ENCODE measurements at regions of chr3 and their contacts with region 1.

Region 1: DNA sequence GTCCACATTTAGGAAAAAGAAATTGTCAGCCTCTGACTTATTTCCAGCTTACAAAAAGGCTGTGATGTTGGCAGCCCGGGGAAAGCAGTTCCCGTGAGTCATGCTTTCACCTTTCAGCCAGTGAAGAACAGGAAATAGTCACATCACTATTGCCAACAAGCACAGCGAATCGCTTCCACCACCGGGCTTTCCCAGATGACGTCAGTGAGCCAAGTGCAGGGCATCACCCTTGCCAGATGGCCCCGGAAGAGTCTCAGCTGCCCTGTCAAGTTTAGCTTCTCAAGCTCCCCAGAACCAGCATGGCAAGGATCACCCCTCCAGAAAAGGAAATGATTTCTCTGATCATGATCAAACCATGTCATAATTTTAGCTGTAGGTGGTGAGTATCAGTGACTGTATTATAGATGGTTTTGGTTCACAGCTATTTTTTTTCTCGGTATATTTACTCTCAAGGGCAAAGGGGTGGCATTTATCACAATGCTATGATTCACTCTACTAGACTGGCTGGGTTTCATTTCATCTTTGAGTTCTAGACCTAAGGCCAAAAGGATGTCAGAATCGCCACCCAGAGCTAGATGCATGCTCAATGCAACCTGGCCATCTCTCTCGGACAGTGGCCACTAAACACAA is 32.9 kb downstream of the B3GNT5 start:
- DNase-seq: peak; percentile 90
- H3K4me3 Mint-ChIP-seq: peak overlapping the region; percentile 60
- H3K27ac Mint-ChIP-seq: peak overlapping the region; percentile 94
- H3K4me1 Mint-ChIP-seq: peaks cover 36% of the 10 kb centered on the region
- H3K27me3 Mint-ChIP-seq: no peaks in the 10 kb centered on the region

Region 2: GRCh38 chr3:183099026-183099837 is 186.7 kb before region 1 on chr3 and contains the start of gene MCCC1:
- intact Hi-C with region 1: loop called (anchors 1 kb)
- DNase-seq: peak; percentile 97
- H3K4me3 Mint-ChIP-seq: peak within 1 kb of the TSS; percentile 97
- H3K27ac Mint-ChIP-seq: peak within 1 kb of the TSS; percentile 92
- H3K4me1 Mint-ChIP-seq: peaks cover 41% of the 10 kb centered on the region
- H3K27me3 Mint-ChIP-seq: no peaks in the 10 kb centered on the region
- total RNA-seq, gene MCCC1: 27.3 and 30.0 TPM in 2 replicates

Region 3: GRCh38 chr3:183252973-183253901 is 32.7 kb before region 1 on chr3 and contains the start of gene B3GNT5:
- intact Hi-C with region 1: loop called (anchors 1 kb)
- DNase-seq: peak; percentile 11
- H3K4me3 Mint-ChIP-seq: peak within 1 kb of the TSS; percentile 81
- H3K27ac Mint-ChIP-seq: peak within 1 kb of the TSS; percentile 52
- H3K4me1 Mint-ChIP-seq: peaks cover 18% of the 10 kb centered on the region
- H3K27me3 Mint-ChIP-seq: peaks cover 10% of the 10 kb centered on the region
- total RNA-seq, gene B3GNT5: 17.0 and 17.7 TPM in 2 replicates

Region 4: GRCh38 chr3:183317886-183318865 is 32.2 kb after region 1 on chr3:
- intact Hi-C with region 1: loop called (anchors 1 kb)
- DNase-seq: no peak
- H3K4me3 Mint-ChIP-seq: no peak overlapping the region
- H3K27ac Mint-ChIP-seq: no peak overlapping the region
- H3K4me1 Mint-ChIP-seq: peaks cover 17% of the 10 kb centered on the region
- H3K27me3 Mint-ChIP-seq: no peaks in the 10 kb centered on the region

Region 5: DNA sequence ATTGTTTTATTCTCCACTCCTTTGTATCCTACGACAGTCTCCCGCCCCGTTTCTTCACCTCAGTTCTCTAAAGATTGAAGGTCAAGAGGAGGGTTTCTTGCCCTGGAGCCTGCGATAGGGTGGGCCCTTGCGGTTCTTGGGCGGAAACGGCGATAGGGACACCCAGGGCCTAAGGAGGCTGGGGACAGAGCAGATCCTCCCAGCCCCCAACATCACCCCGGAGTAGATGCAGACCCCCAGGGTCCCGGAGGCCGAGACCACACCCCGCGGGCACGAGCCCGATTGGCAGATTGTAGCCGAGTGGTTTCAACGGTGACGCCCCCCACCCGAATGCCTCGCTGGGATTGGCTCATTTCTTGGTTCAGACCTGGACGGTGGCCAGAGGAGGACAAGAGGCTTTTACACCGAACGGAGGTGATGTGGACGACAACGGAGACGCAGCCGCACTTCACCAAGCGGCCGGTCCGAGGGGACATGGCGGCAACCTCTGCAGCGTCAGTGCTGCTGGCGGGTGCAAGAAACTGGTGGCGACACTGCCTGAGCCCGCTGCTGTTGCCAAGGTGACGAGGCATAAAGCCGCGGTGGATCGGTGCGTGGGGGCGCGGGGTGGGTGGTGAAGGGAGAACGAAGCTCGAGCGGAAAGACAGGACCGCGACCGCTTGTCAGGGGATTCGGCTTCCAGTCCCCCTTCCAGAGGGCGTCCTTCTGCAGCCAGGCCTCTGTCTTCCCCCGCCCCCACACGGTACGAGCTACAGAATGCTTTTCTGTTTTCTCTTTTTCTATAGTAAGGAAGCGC is 161.5 kb after region 1 on chr3:
- intact Hi-C with region 1: loop called (anchors 5 kb)
- DNase-seq: peak; percentile 75
- H3K4me3 Mint-ChIP-seq: peak overlapping the region; percentile 94
- H3K27ac Mint-ChIP-seq: peak overlapping the region; percentile 86
- H3K4me1 Mint-ChIP-seq: peaks cover 22% of the 10 kb centered on the region
- H3K27me3 Mint-ChIP-seq: peaks cover 8% of the 10 kb centered on the region

Region 6: DNA sequence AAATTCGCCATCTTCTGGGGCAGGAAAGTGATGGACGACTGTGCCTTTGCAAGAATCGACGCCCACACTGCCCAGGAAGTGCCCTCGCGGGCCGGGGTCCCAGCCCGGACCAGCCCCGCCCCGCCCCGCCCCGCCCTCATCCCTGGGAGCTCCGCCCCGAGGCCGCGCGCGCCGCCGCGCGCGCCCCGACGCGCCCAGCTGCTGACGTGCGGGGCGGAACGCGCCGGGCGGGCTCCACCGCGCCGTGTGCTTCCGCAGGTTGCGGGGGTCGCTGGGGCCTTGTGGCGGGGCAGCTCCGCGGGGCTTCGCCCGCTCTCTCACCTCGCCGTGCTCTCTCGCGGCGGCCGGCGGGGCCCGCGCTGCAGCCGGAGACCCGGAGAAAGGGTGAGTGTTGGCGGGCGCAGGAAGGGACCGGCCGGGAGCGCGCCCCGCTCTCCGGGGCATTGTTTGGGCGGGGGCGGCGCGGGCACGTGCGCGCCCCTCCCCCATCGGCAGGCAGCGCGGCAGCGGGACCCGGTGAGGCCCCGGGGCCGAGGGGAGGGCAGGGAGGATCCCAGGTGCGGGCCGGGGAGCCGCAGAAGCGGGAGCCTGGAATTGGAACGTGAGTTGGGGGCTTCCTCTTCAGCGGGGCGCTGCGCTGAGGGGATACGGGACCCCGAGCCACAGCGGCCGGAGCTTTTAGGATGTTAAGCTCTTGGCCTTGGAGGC is 411.8 kb after region 1 on chr3 and contains the start of gene YEATS2:
- intact Hi-C with region 1: loop called (anchors 5 kb)
- DNase-seq: peak; percentile 65
- H3K4me3 Mint-ChIP-seq: peak within 1 kb of the TSS; percentile 88
- H3K27ac Mint-ChIP-seq: peak within 1 kb of the TSS; percentile 94
- H3K4me1 Mint-ChIP-seq: peaks cover 37% of the 10 kb centered on the region
- H3K27me3 Mint-ChIP-seq: no peaks in the 10 kb centered on the region
- total RNA-seq, gene YEATS2: 54.2 and 57.4 TPM in 2 replicates

Measured in activated T-helper 1 cell treated with anti-CD3 and anti-CD28 coated beads, Interleukin-12 subunit alpha, Interleukin-12 subunit beta, Interleukin-2, Interleukin-4 antibody, amounts not matched to agents 30 ng/mL and 10 ng/mL and 1 ng/mL, durations not matched to agents 14 hours and 24 hours and 36 hours (primary cell).